ENCODE measurements at regions of chr11 and their contacts with region 1.

Region 1: DNA sequence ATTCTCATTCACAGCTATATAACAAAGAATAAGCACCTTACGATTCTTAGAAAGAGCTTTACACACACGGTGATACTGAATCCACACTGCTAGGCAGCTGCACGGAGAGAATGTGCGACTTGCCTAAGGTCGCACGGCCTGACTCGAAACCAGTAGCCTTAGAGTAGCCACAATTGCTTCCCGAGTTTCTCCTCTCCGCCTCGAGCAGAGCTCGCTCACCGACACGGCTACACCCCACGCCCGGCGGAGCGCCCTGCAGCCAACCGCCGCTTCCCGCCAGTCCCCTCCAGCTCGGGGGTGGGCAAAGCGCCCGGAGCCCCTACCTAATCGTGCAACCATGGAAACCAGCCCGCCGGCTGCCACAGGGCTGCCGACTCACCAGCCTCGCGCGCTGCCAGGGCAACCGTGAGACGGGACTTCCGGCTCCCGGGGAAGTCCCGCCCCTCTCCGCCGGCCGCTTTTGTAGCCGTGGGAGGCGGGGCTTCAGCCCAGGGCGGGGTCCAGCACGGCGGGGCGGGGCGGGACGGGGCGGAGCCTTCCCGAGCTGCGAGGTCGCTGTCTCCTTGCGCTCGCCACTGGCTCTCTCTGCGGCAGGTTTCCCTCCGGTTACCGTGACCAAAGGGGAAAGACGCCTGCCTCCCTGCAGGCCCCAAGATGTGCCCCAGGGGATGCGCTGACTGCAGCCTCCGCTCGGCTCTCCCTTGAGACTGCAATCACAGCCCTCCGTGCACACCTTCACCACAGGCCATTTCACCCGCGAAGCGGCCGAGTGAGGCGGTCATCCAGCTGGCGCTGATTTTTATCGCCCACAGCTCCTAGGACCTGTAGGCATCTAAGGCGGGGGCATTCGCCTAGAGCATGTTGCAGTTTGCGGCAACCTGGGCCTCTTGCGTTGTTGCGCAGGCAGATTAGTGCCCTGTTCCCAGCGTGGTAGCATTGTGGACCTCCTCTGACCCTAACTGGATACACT is 1.1 kb downstream of the BSCL2 start:
- DNase-seq: peak; percentile 93 to 97 (median 96)
- ATAC-seq: peak; percentile 95
- H3K4me3 ChIP-seq: peak overlapping the region; percentile 72
- H3K27ac ChIP-seq: peak overlapping the region; percentile 82
- H3K4me1 ChIP-seq: peaks cover 29 to 42% of the 10 kb centered on the region in 2 experiments
- H3K27me3 ChIP-seq: no peaks in the 10 kb centered on the region
- CTCF ChIP-seq: no peak
- EP300 ChIP-seq: no peak
- POLR2A ChIP-seq: peak; percentile 79
- RAD21 ChIP-seq: no peak

Region 2: DNA sequence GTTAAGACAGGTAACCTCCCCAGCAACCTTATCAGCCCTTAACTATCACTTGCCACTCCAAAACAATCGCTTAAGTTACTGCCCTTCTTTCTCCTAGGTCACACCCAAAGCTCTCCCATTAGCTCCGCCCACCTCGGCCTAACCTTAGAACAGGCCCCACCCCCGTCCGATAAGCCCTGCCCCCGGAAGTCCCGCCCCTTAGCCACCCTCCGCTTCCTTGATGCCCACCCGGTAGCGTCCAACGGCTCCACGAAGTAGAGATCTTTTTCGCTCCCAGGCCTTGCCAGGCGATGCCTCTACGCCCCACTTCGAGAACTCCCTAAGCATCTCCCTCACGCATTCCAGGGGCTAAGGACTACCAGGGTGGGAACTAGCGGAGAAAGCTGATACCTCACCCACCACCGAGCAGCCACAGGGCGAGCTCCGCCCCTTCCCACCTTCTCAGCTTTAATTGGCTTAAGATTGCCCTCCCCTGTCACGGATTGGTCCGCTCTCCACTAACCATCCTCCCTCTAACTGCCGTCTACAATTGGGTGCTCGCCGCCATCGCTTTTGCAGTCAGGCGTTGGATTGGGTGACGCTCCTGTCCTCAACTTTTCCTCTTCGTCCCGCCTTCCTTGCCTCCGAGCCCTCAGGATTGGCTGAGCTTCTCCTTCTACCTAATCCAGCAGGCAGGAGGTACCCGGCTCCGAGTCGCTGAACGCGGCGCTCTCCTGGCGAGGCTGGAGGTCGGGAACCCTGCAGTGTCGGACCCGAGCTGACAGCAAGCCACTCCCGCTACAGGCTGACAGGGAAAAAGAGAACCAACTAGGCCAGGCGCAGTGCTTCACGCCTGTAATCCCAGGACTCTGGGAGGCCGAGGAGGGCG is 47.8 kb after region 1 on chr11 and contains the start of gene ZBTB3:
- CTCF ChIA-PET with region 1: no interaction called
- POLR2A ChIA-PET with region 1: interaction called, 12 read pairs
- in situ Hi-C with region 1: no loop called
- intact Hi-C with region 1: no loop called
- DNase-seq: peak; percentile 95 to 99 (median 96)
- ATAC-seq: peak; percentile 98
- H3K4me3 ChIP-seq: peak within 1 kb of the TSS; percentile 63
- H3K27ac ChIP-seq: peak within 1 kb of the TSS; percentile 86
- H3K4me1 ChIP-seq: peaks cover 14 to 28% of the 10 kb centered on the region in 2 experiments; a peak in 4 of 5 replicates
- H3K27me3 ChIP-seq: no peaks in the 10 kb centered on the region
- CTCF ChIP-seq: peak in 1 of 3 experiments; percentile 1; a peak in 1 of 6 replicates
- EP300 ChIP-seq: no peak
- POLR2A ChIP-seq: peak; percentile 98
- RAD21 ChIP-seq: no peak
- polyA plus RNA-seq, gene ZBTB3: 1.9 to 3.0 TPM